ENCODE measurements at regions of chr2 and their contacts with region 1.

Region 1: DNA sequence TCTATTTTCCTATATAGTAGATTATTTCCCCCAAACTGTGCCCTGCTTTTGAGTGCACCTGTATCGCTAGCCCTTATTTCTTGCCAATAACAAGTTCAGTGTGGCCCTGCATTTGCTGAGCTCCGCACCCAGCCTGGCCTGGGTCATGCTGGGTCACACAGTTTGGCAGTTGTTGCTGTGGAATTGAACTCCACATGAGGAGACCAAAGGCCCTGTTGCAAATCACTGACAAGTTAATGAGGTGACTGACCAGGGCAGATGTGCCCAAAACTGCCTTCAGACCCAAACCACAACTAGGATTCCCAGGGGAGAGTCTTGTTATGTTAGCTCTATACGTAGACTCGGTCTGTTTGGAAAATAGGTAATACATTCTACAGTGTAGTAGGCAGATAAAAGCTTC is 31.0 kb downstream of the COL4A4 start:
- DNase-seq: no peak
- ATAC-seq: no peak
- H3K4me3 ChIP-seq: no peak overlapping the region
- H3K27ac ChIP-seq: no peak overlapping the region
- H3K4me1 ChIP-seq: no peaks in the 10 kb centered on the region
- H3K27me3 ChIP-seq: peaks cover 2 to 54% of the 10 kb centered on the region in 2 experiments; a peak in 3 of 5 replicates
- CTCF ChIP-seq: no peak
- EP300 ChIP-seq: no peak
- POLR2A ChIP-seq: no peak
- RAD21 ChIP-seq: no peak

Region 2: DNA sequence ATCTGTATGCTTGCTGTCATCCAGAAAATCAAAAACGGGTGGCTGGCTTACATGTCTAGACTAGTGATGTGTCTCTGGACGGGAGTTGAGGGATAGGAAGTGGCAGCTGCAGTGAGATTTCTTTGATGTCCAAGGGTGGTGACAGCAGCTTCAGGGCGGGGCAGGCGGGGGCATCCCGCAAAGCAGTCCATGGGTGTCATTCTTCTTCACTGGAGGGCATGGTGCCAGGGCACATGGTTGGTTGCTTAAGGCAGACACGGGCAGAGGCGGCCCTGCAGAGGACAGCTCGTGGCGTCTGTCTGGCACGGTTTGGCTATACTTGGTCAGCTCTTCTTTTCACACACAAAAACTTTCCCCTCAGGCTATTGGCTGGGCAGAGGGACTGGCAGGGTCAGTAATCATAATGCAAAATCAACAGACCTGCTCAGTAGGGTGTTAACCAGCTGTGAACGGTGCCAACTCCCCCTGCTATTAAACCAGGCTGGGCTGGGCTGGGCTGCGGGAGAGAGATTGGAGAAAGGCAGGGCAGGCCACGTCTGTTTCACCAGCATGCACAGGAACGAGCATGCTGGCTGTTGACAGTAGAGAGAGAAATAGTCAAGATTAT is 95.2 kb after region 1 on chr2:
- CTCF ChIA-PET with region 1: no interaction called
- POLR2A ChIA-PET with region 1: no interaction called
- in situ Hi-C with region 1: loop called (anchors 10 kb)
- intact Hi-C with region 1: no loop called
- DNase-seq: no peak
- ATAC-seq: peak; percentile 31; the same call in 2 of the 3 replicates
- H3K4me3 ChIP-seq: no peak overlapping the region
- H3K27ac ChIP-seq: no peak overlapping the region
- H3K4me1 ChIP-seq: no peaks in the 10 kb centered on the region
- H3K27me3 ChIP-seq: peaks cover 0 to 5% of the 10 kb centered on the region in 2 experiments; a peak in 2 of 5 replicates
- CTCF ChIP-seq: no peak
- EP300 ChIP-seq: no peak
- POLR2A ChIP-seq: no peak
- RAD21 ChIP-seq: no peak

Region 3: DNA sequence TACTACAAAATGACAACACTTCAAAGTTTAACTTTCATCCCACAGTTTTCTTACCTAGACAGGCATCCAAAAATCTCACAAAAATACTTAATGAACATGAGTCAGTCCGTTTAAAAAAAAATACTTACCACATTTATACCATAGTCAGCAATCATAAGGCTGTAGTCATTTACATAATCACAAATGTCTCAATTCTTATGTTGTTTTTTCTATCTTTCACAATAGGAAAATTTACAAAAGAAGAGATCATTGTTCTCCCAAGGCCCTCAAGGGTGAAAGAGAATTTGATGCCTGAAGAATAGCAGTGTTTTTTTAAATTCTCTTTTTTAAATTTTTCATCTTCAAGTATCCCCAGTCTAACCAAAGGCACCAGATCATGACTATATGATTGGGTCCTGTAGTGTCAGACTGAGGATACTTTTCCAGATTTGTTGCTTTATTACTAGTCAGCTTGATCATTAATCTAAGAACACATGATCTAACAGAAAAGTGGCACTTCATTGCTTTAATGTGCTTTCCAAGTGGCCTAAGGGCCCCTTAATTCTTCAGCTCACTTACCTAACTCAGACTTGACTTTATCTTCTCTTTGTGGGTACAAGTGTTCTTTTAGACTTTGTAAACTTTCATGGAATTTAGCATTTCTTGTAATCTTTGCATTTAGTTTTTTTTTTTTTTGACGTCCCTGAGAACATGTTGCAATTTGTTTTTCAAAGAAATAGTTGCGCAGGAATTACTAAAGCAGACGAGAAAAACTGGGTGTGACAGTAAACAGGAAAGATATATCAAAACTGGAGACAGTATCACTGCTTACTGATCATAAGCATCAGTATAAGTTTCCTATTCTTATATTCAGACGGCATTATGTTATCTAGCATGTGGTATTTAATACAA is 538.4 kb after region 1 on chr2:
- CTCF ChIA-PET with region 1: no interaction called
- POLR2A ChIA-PET with region 1: no interaction called
- in situ Hi-C with region 1: no loop called
- intact Hi-C with region 1: no loop called
- DNase-seq: no peak
- ATAC-seq: no peak
- H3K4me3 ChIP-seq: no peak overlapping the region
- H3K27ac ChIP-seq: no peak overlapping the region
- H3K4me1 ChIP-seq: peaks cover 5% of the 10 kb centered on the region; the same call in 1 of the 2 replicates
- H3K27me3 ChIP-seq: no peaks in the 10 kb centered on the region
- CTCF ChIP-seq: no peak
- EP300 ChIP-seq: no peak
- POLR2A ChIP-seq: no peak
- RAD21 ChIP-seq: no peak